ENCODE measurements at regions of chr19 and their contacts with region 1.

Region 1: GRCh38 chr19:23273590-23274413 is 23.6 kb upstream of the ZNF724 start:
- DNase-seq: peak; percentile 87
- H3K4me3 ChIP-seq: peak overlapping the region; percentile 67 to 88 (median 71)
- H3K27ac ChIP-seq: peak overlapping the region; percentile 59
- H3K4me1 ChIP-seq: no peaks in the 10 kb centered on the region
- H3K27me3 ChIP-seq: no peaks in the 10 kb centered on the region
- CTCF ChIP-seq: peak in 1 of 2 donors; percentile 24

Region 2: DNA sequence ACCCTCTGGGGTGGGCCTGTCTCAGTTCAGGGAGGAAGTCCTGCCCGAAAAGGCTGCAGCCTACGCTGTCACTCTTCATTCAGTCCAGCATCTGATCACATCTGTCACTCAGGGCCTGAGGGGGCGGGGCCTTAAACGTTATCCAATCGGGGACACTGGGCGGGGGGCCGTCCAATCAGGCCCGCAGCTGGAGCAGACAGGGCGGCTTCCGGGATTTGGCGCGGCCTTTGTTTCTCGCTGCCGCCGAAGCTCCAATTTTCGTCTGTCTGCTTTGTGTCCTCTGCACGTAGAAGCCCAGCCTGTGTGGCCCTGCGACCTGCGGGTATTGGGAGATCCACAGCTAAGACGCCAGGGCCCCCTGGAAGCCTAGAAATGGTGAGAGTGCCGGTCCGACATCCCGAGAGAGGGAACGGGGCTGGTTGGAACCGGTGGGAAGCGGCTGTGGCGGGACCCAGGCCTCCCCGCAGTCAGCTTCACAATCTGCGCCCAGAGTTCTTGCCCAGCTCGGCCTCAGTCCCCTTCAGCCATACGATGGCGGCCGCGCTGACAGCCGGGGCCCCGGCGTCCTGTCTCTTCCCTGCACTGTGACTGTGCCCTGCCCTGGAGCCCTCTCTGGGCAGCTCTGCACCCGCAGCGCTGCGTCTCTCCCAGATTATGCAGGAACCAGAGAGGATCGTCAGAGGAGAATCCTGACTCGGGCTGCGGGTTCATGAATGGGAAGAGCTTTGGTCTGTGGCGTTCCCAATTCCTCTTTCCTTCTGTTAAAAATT is 156.8 kb before region 1 on chr19 and contains the start of gene ZNF730:
- CTCF ChIA-PET with region 1: no interaction called
- dilution Hi-C with region 1: no loop called
- in situ Hi-C with region 1: no loop called
- intact Hi-C with region 1: no loop called
- DNase-seq: peak; percentile 80
- H3K4me3 ChIP-seq: no peak within 1 kb of the TSS
- H3K27ac ChIP-seq: no peak within 1 kb of the TSS
- H3K4me1 ChIP-seq: no peaks in the 10 kb centered on the region
- H3K27me3 ChIP-seq: no peaks in the 10 kb centered on the region
- CTCF ChIP-seq: no peak
- total RNA-seq, gene ZNF730: 1.6 to 3.5 TPM

Region 3: DNA sequence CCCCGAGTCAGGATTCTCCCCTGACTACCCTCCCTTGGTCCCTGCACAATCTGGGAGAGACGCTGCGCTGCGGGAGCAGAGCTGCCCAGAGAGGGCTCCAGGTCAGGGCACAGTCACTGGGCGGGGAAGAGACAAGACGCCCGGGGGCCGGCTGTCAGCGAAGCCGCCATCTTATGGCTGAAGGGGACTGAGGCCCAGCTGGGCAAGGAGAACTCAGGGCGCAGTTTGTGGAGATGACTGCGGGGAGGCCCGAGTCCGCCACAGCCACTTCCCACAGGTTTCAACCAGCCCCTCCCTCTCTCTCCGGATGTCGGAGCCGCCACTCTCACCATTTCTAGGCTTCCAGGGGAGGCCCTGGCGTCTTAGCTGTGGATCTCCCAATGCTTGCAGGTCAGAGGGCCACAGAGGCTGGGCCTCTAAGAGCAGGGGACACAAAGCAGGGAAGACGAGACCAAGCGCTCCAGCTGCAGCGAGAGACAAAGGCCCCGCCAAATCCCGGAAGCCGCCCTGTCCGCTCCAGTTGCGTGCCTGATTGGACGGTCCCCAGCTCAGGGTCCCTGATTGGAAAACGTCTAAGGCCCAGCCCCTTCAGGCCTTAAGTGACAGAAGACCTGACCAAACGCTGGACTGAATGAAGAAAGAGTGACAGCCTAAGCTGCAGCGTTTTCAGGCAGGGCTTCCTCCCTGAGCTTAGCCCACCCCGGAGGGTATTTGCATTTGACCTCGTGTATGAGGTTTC is 23.7 kb before region 1 on chr19 and contains the start of gene ZNF724:
- CTCF ChIA-PET with region 1: no interaction called
- dilution Hi-C with region 1: no loop called
- in situ Hi-C with region 1: no loop called
- intact Hi-C with region 1: loop called (anchors 1 kb)
- DNase-seq: peak; percentile 96
- H3K4me3 ChIP-seq: peak within 1 kb of the TSS; percentile 68 to 99 (median 77)
- H3K27ac ChIP-seq: peak within 1 kb of the TSS; percentile 57
- H3K4me1 ChIP-seq: no peaks in the 10 kb centered on the region
- H3K27me3 ChIP-seq: peaks cover 1% of the 10 kb centered on the region
- CTCF ChIP-seq: no peak
- total RNA-seq, gene ZNF724: 8.3 to 10.3 TPM

Region 4: GRCh38 chr19:23395041-23395721 is 121.4 kb after region 1 on chr19 and contains the start of gene ZNF91:
- CTCF ChIA-PET with region 1: no interaction called
- dilution Hi-C with region 1: no loop called
- in situ Hi-C with region 1: no loop called
- intact Hi-C with region 1: loop called (anchors 10 kb)
- DNase-seq: peak; percentile 97
- H3K4me3 ChIP-seq: peak within 1 kb of the TSS; percentile 69 to 75 (median 75)
- H3K27ac ChIP-seq: peak within 1 kb of the TSS; percentile 82
- H3K4me1 ChIP-seq: no peaks in the 10 kb centered on the region
- H3K27me3 ChIP-seq: no peaks in the 10 kb centered on the region
- CTCF ChIP-seq: no peak
- total RNA-seq, gene ZNF91: 27.8 to 43.7 TPM

Region 5: GRCh38 chr19:23914402-23915301 is 640.9 kb after region 1 on chr19 and contains the start of gene ZNF726:
- CTCF ChIA-PET with region 1: interaction called, 18 read pairs
- dilution Hi-C with region 1: no loop called
- in situ Hi-C with region 1: no loop called
- intact Hi-C with region 1: no loop called
- DNase-seq: peak; percentile 93
- H3K4me3 ChIP-seq: peak within 1 kb of the TSS; percentile 57 to 72 (median 61)
- H3K27ac ChIP-seq: no peak within 1 kb of the TSS
- H3K4me1 ChIP-seq: no peaks in the 10 kb centered on the region
- H3K27me3 ChIP-seq: no peaks in the 10 kb centered on the region
- CTCF ChIP-seq: no peak
- total RNA-seq, gene ZNF726: 2.5 to 4.1 TPM